HepG2 (cell line): ENCODE measurements at regions of chr1 and their contacts with region 1.

Region 1: GRCh38 chr1:32716312-32717148 is 14.0 kb upstream of the SYNC start:
- DNase-seq: peak; percentile 89
- ATAC-seq: peak; percentile 82
- H3K4me3 ChIP-seq: peak overlapping the region; percentile 21 to 66 (median 47); a peak in 5 of 6 replicates
- H3K27ac ChIP-seq: peak overlapping the region; percentile 58
- H3K4me1 ChIP-seq: peaks cover 88% of the 10 kb centered on the region
- H3K27me3 ChIP-seq: no peaks in the 10 kb centered on the region
- CTCF ChIP-seq: 0 out of 2 replicates have a peak, but pooled peaks have one; percentile 15
- EP300 ChIP-seq: peak; percentile 15 to 26; a peak in 1 of 4 replicates
- POLR2A ChIP-seq: peak in 1 of 2 experiments; percentile 89; a peak in 2 of 4 replicates
- RAD21 ChIP-seq: no peak

Region 2: GRCh38 chr1:32413507-32414185 is 302.9 kb before region 1 on chr1:
- CTCF ChIA-PET with region 1: no interaction called
- POLR2A ChIA-PET with region 1: no interaction called
- in situ Hi-C with region 1: no loop called
- intact Hi-C with region 1: no loop called
- DNase-seq: peak; percentile 83
- ATAC-seq: peak; percentile 98
- H3K4me3 ChIP-seq: peak overlapping the region in 1 of 3 experiments; percentile 31; a peak in 2 of 6 replicates
- H3K27ac ChIP-seq: no peak overlapping the region
- H3K4me1 ChIP-seq: peaks cover 25% of the 10 kb centered on the region
- H3K27me3 ChIP-seq: peaks cover 2 to 5% of the 10 kb centered on the region in 2 experiments; a peak in 2 of 5 replicates
- CTCF ChIP-seq: peak; percentile 96
- EP300 ChIP-seq: no peak
- POLR2A ChIP-seq: no peak
- RAD21 ChIP-seq: peak; percentile 89

Region 3: GRCh38 chr1:32695098-32695904 is 21.2 kb before region 1 on chr1:
- CTCF ChIA-PET with region 1: no interaction called
- POLR2A ChIA-PET with region 1: interaction called, 12 read pairs
- in situ Hi-C with region 1: no loop called
- intact Hi-C with region 1: no loop called
- DNase-seq: peak; percentile 81
- ATAC-seq: peak; percentile 80
- H3K4me3 ChIP-seq: peak overlapping the region; percentile 55 to 78 (median 73)
- H3K27ac ChIP-seq: peak overlapping the region; percentile 95
- H3K4me1 ChIP-seq: peaks cover 27% of the 10 kb centered on the region
- H3K27me3 ChIP-seq: no peaks in the 10 kb centered on the region
- CTCF ChIP-seq: 0 out of 2 replicates have a peak, but pooled peaks have one; percentile 22
- EP300 ChIP-seq: no peak
- POLR2A ChIP-seq: peak; percentile 52 to 67
- RAD21 ChIP-seq: 0 out of 2 replicates have a peak, but pooled peaks have one; percentile 16

Region 4: GRCh38 chr1:32729254-32730046 is 12.9 kb after region 1 on chr1:
- CTCF ChIA-PET with region 1: interaction called, 6 read pairs
- POLR2A ChIA-PET with region 1: interaction called, 8 read pairs
- in situ Hi-C with region 1: no loop called
- intact Hi-C with region 1: loop called (anchors 2 kb)
- DNase-seq: no peak
- ATAC-seq: peak; percentile 74
- H3K4me3 ChIP-seq: no peak overlapping the region
- H3K27ac ChIP-seq: no peak overlapping the region
- H3K4me1 ChIP-seq: peaks cover 54% of the 10 kb centered on the region
- H3K27me3 ChIP-seq: peaks cover 2 to 10% of the 10 kb centered on the region in 2 experiments; a peak in 2 of 5 replicates
- CTCF ChIP-seq: 0 out of 2 replicates have a peak, but pooled peaks have one; percentile 3
- EP300 ChIP-seq: no peak
- POLR2A ChIP-seq: no peak
- RAD21 ChIP-seq: no peak

Region 5: DNA sequence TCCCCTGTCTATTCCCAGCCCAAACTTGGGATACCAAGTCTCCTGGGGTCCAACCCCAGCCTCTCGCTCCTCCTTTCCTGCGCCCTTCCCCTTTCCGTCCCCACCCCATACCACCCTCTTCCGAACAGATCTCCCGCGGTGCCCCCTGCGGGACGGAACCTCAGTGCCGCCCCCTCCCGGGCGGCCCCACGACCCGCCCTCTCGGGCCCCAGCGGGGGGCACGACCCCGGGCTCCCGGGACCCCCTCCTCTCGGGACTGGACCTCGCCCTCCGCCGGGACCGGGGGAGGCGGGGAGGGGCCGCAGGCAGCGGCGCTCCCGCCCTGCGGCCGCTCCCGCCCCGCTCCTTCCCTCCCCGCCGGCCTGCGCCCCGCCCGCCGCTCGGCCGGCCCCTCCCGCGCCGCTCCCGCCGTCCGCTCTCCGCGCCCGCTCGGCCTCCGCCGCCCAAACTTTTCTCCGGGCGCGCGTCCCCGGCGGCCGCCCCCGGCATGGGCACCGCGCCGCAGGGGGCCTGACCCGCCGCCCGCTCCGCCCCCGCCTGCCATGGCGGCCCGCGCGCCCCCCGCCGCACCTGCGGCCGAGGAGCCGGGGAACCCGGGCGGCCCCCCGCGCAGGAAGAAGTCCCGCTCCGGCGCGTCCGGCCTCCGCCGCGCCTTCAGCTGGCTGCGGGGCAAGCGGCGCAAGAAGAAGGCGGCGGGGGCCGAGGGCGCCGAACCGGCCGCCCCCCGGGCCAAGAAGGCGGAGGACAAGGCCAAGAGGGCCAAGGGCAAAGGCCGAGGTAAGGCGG is 25.1 kb after region 1 on chr1:
- CTCF ChIA-PET with region 1: interaction called, 18 read pairs
- POLR2A ChIA-PET with region 1: interaction called, 27 read pairs
- in situ Hi-C with region 1: no loop called
- intact Hi-C with region 1: loop called (anchors 1 kb)
- DNase-seq: no peak
- ATAC-seq: peak; percentile 20
- H3K4me3 ChIP-seq: peak overlapping the region; percentile 80 to 92 (median 91)
- H3K27ac ChIP-seq: peak overlapping the region; percentile 87
- H3K4me1 ChIP-seq: peaks cover 62% of the 10 kb centered on the region
- H3K27me3 ChIP-seq: no peaks in the 10 kb centered on the region; a peak in 1 of 5 replicates
- CTCF ChIP-seq: peak; percentile 65
- EP300 ChIP-seq: no peak
- POLR2A ChIP-seq: no peak
- RAD21 ChIP-seq: peak; percentile 82

Region 6: DNA sequence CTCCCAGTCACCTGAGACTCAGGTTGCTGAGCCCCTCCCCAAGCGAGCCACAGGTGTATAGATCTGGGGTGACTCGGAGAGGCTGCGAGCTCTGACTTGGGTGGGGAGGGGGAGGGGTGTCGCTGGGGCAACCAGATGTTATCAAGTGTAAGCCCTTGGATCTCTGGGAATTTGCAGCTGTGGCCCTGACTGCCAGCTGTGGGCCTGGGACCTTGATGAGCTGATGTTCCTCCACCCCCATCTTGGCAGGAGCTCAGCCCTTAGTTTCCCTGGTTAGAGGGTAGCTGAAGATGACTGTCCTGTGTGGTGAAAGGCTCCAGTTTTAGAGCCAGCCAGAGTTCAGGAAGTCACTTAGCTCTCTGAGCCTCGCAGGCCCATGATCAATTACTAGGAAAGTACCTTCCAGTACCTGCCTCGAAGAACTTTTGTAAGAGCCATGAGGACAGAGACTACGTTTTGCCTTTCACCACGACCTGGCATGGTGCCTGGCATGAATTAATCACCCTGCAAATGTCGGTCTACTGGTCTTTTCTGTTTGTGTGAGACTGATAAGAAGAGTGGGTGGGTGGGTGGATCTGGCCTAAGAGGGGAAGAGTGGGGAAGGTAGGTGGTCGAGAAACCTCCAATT is 44.8 kb after region 1 on chr1:
- CTCF ChIA-PET with region 1: interaction called, 5 read pairs
- POLR2A ChIA-PET with region 1: interaction called, 13 read pairs
- in situ Hi-C with region 1: loop called (anchors 5 kb)
- intact Hi-C with region 1: loop called (anchors 5 kb)
- DNase-seq: no peak
- ATAC-seq: no peak
- H3K4me3 ChIP-seq: no peak overlapping the region
- H3K27ac ChIP-seq: peak overlapping the region; percentile 92
- H3K4me1 ChIP-seq: peaks cover 62% of the 10 kb centered on the region
- H3K27me3 ChIP-seq: no peaks in the 10 kb centered on the region
- CTCF ChIP-seq: no peak
- EP300 ChIP-seq: no peak
- POLR2A ChIP-seq: no peak
- RAD21 ChIP-seq: no peak

Region 7: GRCh38 chr1:32773018-32773763 is 56.7 kb after region 1 on chr1:
- CTCF ChIA-PET with region 1: interaction called, 88 read pairs
- POLR2A ChIA-PET with region 1: interaction called, 51 read pairs
- in situ Hi-C with region 1: loop called (anchors 5 kb)
- intact Hi-C with region 1: loop called (anchors 1 kb)
- DNase-seq: peak; percentile 53
- ATAC-seq: peak; percentile 79
- H3K4me3 ChIP-seq: no peak overlapping the region
- H3K27ac ChIP-seq: no peak overlapping the region
- H3K4me1 ChIP-seq: no peaks in the 10 kb centered on the region
- H3K27me3 ChIP-seq: no peaks in the 10 kb centered on the region
- CTCF ChIP-seq: peak; percentile 94
- EP300 ChIP-seq: no peak
- POLR2A ChIP-seq: no peak; a peak in 1 of 4 replicates
- RAD21 ChIP-seq: peak; percentile 93

Region 8: GRCh38 chr1:32876341-32877210 is 160.0 kb after region 1 on chr1:
- CTCF ChIA-PET with region 1: interaction called, 3 read pairs
- POLR2A ChIA-PET with region 1: no interaction called
- in situ Hi-C with region 1: no loop called
- intact Hi-C with region 1: loop called (anchors 10 kb)
- DNase-seq: peak; percentile 24
- ATAC-seq: peak; percentile 75
- H3K4me3 ChIP-seq: peak overlapping the region in 1 of 3 experiments; percentile 3; a peak in 1 of 6 replicates
- H3K27ac ChIP-seq: no peak overlapping the region
- H3K4me1 ChIP-seq: peaks cover 18% of the 10 kb centered on the region
- H3K27me3 ChIP-seq: peaks cover 1 to 25% of the 10 kb centered on the region in 2 experiments; a peak in 3 of 5 replicates
- CTCF ChIP-seq: peak; percentile 92
- EP300 ChIP-seq: no peak
- POLR2A ChIP-seq: no peak
- RAD21 ChIP-seq: peak; percentile 59; the same call in 1 of the 2 replicates